B cell (primary cell): ENCODE measurements at regions of chr20 and their contacts with region 1.

Region 1: GRCh38 chr20:2206957-2207769 is 88.6 kb upstream of the TGM3 start:
- DNase-seq: peak; percentile 83
- ATAC-seq: peak; percentile 81
- H3K4me3 ChIP-seq: peak overlapping the region; percentile 16 to 73 (median 70)
- H3K4me3 Mint-ChIP-seq: peak overlapping the region; percentile 90
- H3K27ac ChIP-seq: peak overlapping the region in 1 of 2 donors; percentile 37
- H3K27ac Mint-ChIP-seq: peak overlapping the region; percentile 67
- H3K4me1 ChIP-seq: peaks cover 4 to 16% of the 10 kb centered on the region in 2 donors
- H3K4me1 Mint-ChIP-seq: peaks cover 22% of the 10 kb centered on the region
- H3K27me3 ChIP-seq: peaks cover 0 to 5% (median 0%) of the 10 kb centered on the region in 4 experiments
- H3K27me3 Mint-ChIP-seq: no peaks in the 10 kb centered on the region
- CTCF ChIP-seq: peak; percentile 86

Region 2: GRCh38 chr20:2101865-2102584 is 105.1 kb before region 1 on chr20:
- CTCF ChIA-PET with region 1: interaction called, 5 read pairs
- POLR2A ChIA-PET with region 1: interaction called, 3 read pairs
- intact Hi-C with region 1: loop called (anchors 2 kb)
- DNase-seq: peak; percentile 98
- ATAC-seq: peak; percentile 79
- H3K4me3 ChIP-seq: peak overlapping the region; percentile 71 to 92 (median 83)
- H3K4me3 Mint-ChIP-seq: peak overlapping the region; percentile 96
- H3K27ac ChIP-seq: peak overlapping the region; percentile 100
- H3K27ac Mint-ChIP-seq: peak overlapping the region; percentile 100
- H3K4me1 ChIP-seq: peaks cover 28 to 32% of the 10 kb centered on the region in 2 donors
- H3K4me1 Mint-ChIP-seq: peaks cover 44% of the 10 kb centered on the region
- H3K27me3 ChIP-seq: no peaks in the 10 kb centered on the region
- H3K27me3 Mint-ChIP-seq: no peaks in the 10 kb centered on the region
- CTCF ChIP-seq: no peak

Region 3: DNA sequence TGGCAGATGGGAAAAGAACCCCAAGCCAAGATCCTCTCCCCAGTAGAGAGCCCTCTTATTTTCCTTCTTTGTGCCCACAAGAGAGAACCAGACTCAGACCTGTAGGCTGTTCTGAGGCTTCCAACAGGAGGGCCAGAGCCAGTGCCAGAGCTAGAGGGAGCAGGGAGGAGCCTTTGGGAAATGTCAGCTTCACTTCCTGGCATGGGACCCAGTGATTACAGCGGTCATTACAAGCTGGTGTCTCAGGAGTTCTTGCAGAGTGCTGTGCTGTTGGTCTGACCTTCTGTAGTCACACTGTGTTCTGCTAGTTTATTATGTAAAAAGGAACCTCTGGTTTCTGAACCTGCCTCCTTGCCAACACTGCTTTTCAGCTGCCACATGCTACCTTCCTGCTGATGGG is 66.6 kb before region 1 on chr20:
- CTCF ChIA-PET with region 1: no interaction called
- POLR2A ChIA-PET with region 1: no interaction called
- intact Hi-C with region 1: no loop called
- DNase-seq: no peak
- ATAC-seq: no peak
- H3K4me3 ChIP-seq: no peak overlapping the region
- H3K4me3 Mint-ChIP-seq: no peak overlapping the region
- H3K27ac ChIP-seq: no peak overlapping the region
- H3K27ac Mint-ChIP-seq: no peak overlapping the region
- H3K4me1 ChIP-seq: no peaks in the 10 kb centered on the region
- H3K4me1 Mint-ChIP-seq: peaks cover 4% of the 10 kb centered on the region
- H3K27me3 ChIP-seq: no peaks in the 10 kb centered on the region
- H3K27me3 Mint-ChIP-seq: no peaks in the 10 kb centered on the region
- CTCF ChIP-seq: no peak

Region 4: DNA sequence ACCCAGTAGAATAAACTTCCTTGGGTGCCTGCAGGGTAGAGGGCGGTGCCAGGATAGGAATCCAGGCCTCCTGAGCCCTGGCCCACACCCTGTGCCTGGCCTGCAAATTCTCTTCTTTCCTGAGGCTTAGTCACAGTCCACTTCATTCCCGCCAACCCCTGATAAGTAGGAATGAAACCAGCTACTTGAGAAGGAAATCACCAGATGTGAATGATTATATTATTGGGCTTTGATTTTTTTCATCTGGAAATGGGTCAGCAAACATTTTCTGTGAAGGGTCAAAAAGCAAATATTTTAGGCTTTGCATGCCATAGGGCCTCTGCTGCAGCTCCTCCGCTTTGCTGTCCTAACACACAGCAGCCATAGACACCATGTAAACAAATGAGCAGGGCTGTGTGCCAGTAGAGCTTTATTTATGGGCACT is 55.3 kb before region 1 on chr20:
- CTCF ChIA-PET with region 1: no interaction called
- POLR2A ChIA-PET with region 1: no interaction called
- intact Hi-C with region 1: no loop called
- DNase-seq: no peak
- ATAC-seq: no peak
- H3K4me3 ChIP-seq: no peak overlapping the region
- H3K4me3 Mint-ChIP-seq: no peak overlapping the region
- H3K27ac ChIP-seq: no peak overlapping the region
- H3K27ac Mint-ChIP-seq: no peak overlapping the region
- H3K4me1 ChIP-seq: no peaks in the 10 kb centered on the region
- H3K4me1 Mint-ChIP-seq: no peaks in the 10 kb centered on the region
- H3K27me3 ChIP-seq: no peaks in the 10 kb centered on the region
- H3K27me3 Mint-ChIP-seq: no peaks in the 10 kb centered on the region
- CTCF ChIP-seq: no peak

Region 5: DNA sequence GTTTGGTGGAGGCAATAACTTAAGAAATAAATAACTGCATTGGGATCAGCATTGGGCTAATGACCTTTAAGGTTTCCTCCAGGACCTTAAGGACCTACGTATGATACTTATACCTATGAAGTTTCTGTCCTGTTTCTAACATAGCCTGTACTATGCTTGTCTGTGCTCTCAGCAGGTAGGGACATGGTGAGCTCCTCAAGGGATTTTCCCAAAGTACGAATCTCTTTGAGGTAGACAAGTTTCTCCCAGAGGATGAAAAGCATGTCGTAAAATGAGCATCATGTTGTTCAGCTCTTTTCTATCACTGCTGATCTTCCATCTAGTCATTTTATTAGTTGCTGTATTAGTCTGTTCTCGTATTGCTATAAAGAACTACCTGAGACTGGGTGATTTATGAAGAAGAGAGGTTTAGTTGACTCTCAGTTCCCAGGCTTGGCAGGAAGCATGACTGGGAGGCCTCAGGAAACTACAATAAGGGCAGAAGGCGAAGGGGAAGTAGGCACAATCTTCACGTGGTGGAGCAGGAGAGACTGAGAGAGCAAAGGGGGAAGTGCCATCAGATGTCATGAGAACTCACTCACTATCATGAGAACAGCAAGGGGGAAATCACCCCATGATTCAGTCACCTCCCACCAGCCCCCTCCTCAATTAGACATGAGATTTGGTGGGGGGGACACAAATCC is 10.8 kb after region 1 on chr20:
- CTCF ChIA-PET with region 1: interaction called, 16 read pairs
- POLR2A ChIA-PET with region 1: no interaction called
- intact Hi-C with region 1: no loop called
- DNase-seq: peak; percentile 78
- ATAC-seq: peak; percentile 92
- H3K4me3 ChIP-seq: peak overlapping the region in 1 of 5 experiments; percentile 8
- H3K4me3 Mint-ChIP-seq: peak overlapping the region; percentile 61
- H3K27ac ChIP-seq: peak overlapping the region; percentile 71 to 80
- H3K27ac Mint-ChIP-seq: peak overlapping the region; percentile 89
- H3K4me1 ChIP-seq: peaks cover 10 to 14% of the 10 kb centered on the region in 2 donors
- H3K4me1 Mint-ChIP-seq: peaks cover 20% of the 10 kb centered on the region
- H3K27me3 ChIP-seq: no peaks in the 10 kb centered on the region
- H3K27me3 Mint-ChIP-seq: no peaks in the 10 kb centered on the region
- CTCF ChIP-seq: no peak

Region 6: DNA sequence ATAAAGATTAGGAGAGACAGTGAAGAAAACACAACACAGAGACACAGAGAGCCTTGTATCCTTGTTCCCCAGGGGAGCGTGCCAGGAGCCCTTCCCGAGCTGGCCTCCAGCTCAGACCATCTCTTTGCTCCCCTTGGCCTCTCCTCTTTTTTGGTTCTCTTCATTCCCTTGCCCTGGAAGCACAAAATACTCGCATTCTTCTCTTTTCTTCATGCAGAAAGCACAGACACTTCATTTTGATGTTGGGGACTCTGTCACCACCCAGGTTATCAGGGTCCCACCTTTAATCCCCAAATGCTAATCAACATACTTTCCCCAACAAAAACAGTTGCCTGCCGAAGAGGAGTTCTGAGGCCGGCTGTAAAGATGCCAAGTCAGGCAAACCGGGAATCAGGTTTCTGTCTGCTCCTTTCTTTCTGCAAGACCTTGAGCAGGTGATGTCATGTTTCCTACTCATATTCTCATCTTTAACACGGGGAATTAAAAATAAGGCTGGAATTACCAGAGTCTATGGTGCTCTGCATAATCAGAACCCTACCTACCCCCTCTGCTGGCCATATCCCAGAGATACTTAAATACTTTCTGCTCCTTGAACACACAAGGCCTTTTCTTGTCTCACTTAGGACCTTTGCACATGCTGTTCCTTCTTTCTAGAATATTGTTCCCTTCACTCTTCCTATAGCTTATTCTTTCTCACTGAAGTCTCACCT is 195.3 kb after region 1 on chr20:
- CTCF ChIA-PET with region 1: interaction called, 7 read pairs
- POLR2A ChIA-PET with region 1: no interaction called
- intact Hi-C with region 1: loop called (anchors 1 kb)
- DNase-seq: no peak
- ATAC-seq: no peak
- H3K4me3 ChIP-seq: no peak overlapping the region
- H3K4me3 Mint-ChIP-seq: no peak overlapping the region
- H3K27ac ChIP-seq: no peak overlapping the region
- H3K27ac Mint-ChIP-seq: no peak overlapping the region
- H3K4me1 ChIP-seq: no peaks in the 10 kb centered on the region
- H3K4me1 Mint-ChIP-seq: no peaks in the 10 kb centered on the region
- H3K27me3 ChIP-seq: peaks cover 0 to 10% (median 2%) of the 10 kb centered on the region in 4 experiments
- H3K27me3 Mint-ChIP-seq: peaks cover 17% of the 10 kb centered on the region
- CTCF ChIP-seq: peak; percentile 8

Region 7: DNA sequence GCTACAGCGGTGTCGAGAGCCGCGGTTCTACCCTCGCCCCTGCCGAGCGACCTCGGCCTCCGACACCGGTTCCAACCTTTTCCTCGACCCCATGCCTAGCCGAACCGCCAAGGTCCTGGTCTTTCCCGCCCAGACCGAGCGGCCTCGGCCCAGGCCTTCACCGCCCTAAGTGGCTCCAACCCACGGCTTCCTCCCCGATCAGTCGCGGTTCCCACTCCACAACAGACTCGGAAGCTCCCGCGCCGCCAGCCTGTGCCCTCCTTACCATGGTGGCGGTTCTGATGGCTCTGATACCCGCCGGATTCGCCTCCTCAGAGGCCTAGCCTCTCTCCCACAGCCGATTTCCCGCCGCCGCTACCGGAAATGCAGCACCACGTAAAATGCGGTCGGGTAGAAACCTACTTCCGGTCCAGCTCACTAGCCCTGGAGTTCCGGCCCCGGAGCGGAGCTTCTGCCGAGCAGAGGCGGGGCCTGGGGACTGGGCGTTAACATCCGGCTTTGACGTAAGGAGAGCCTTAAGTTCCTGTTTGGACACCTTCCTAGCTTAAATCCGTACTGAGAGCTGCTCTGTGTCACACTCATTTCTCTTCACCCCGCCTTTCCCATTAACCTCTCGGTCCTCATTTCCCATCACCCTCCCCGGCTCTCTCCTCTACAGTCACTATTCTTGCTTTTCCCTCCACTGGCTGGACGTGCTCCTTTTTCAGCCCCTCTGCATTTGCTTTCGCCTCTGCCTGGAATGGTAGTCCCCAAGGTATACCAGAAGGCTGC is 263.4 kb after region 1 on chr20 and contains the start of gene SNRPB:
- CTCF ChIA-PET with region 1: interaction called, 9 read pairs
- POLR2A ChIA-PET with region 1: no interaction called
- intact Hi-C with region 1: loop called (anchors 5 kb)
- DNase-seq: peak; percentile 98
- ATAC-seq: peak; percentile 94
- H3K4me3 ChIP-seq: peak within 1 kb of the TSS; percentile 74 to 98 (median 91)
- H3K4me3 Mint-ChIP-seq: peak within 1 kb of the TSS; percentile 99
- H3K27ac ChIP-seq: peak within 1 kb of the TSS; percentile 96 to 98
- H3K27ac Mint-ChIP-seq: peak within 1 kb of the TSS; percentile 100
- H3K4me1 ChIP-seq: peaks cover 19 to 20% of the 10 kb centered on the region in 2 donors
- H3K4me1 Mint-ChIP-seq: peaks cover 37% of the 10 kb centered on the region
- H3K27me3 ChIP-seq: no peaks in the 10 kb centered on the region
- H3K27me3 Mint-ChIP-seq: no peaks in the 10 kb centered on the region
- CTCF ChIP-seq: no peak
- total RNA-seq, gene SNRPB: 117 and 123 TPM in 2 replicates